Gastrocnemius medialis (tissue), 4 donors: ENCODE measurements at regions of chr16 and their contacts with region 1.

Region 1: DNA sequence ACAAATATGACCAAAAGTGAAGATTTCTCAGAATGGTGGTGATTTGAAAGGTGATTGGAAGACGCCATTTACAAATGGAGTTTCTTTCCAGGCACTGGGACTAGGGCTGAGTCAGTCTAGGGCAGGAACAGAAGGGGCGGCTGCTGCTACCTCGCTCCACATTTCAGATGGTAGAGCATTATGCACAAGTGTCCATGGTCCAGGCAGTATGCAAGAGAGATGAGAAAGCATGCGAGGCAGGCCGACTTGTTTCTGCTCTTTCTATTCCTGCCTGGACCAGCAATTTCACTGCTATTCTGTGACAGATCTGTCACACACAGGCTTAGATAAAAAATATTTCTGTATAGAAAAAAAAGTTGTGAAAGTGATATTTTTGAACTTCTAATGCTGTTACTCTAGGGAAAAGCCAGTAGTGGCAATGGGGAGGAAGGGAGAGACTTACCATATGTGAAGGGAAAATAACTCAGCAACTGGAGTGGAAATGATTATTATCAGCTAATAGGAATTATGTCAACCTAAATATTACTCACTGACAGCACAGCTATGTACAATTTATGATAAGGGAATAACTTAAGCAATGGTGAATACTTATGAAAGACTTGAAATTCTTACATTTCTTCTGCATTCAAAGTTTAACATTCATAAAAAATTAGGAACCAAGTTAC is 134.7 kb upstream of the NETO2 start:
- DNase-seq: no peak
- ATAC-seq: no peak
- H3K4me3 ChIP-seq: no peak overlapping the region
- H3K27ac ChIP-seq: peak overlapping the region in 1 of 4 donors; percentile 19
- H3K4me1 ChIP-seq: peaks cover 18 to 21% of the 10 kb centered on the region in 2 donors
- H3K27me3 ChIP-seq: no peaks in the 10 kb centered on the region
- CTCF ChIP-seq: no peak
- POLR2A ChIP-seq: no peak

Region 2: DNA sequence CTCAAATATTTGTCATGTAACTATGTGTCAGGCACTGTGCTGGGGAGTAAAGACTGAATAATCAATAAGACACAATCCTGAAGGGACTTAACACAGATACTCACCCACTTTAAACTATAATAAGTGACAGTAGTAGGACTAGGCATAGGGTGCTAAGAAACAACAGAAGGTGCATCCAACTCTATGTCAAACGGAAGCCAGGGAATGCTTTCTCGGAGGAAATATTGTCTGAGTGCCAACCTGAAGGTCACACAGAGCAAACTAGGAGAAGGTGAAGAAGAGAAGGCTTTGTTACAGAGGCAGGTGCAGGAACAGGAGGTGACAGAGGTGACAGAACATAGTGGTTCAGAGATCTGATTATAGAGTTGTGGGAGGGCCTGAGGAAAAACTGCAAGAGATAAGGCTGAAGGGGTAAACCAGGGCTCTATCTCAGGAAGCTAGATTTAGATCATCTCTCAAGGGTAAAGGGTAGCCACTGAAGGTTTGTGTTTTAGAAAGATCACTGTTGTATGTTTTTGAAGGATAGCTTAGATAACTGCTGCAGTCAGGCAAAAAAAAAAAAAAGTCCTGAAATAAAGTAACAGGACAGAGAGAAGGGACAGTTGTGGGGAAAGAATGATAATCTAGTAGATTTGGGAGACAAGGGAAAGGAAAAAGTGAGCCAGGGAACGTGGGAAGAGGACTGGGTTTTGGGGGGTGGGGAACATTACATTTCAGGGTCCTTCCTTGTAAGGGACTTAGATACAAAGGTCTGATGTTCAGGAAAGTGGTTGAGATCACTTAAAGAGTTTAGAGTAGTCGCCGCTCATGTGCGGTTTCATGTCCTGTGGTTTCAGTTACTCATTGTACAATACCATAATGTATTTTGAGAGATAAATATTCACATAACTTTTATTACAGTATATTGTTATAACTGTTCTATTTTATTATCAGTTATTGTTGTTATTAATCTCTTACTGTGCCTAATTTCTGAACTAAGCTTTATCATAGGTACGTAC is 49.1 kb before region 1 on chr16:
- in situ Hi-C with region 1: no loop called
- intact Hi-C with region 1: loop called (anchors 2 kb)
- DNase-seq: no peak
- ATAC-seq: no peak
- H3K4me3 ChIP-seq: no peak overlapping the region
- H3K27ac ChIP-seq: no peak overlapping the region
- H3K4me1 ChIP-seq: no peaks in the 10 kb centered on the region
- H3K27me3 ChIP-seq: no peaks in the 10 kb centered on the region
- CTCF ChIP-seq: no peak
- POLR2A ChIP-seq: no peak

Region 3: DNA sequence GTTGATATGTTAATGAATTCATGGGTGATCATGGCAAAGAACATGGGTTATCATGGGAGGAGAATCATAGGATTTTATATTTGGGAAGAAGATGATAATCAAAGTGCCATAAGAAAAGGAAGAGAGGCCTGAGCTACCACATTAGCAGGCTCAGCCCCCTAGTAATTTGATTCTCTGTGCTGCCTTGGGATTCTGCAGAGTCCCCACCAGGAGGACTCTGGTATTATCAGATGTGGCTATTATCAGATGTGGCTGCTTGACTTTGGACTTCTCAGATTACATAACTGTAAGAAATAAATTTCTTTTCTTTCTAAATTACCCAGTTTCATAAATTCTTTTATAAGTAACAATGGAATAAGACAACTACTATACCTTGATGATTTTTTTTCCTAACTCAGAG is 44.8 kb after region 1 on chr16:
- in situ Hi-C with region 1: no loop called
- intact Hi-C with region 1: no loop called
- DNase-seq: no peak
- ATAC-seq: no peak
- H3K4me3 ChIP-seq: no peak overlapping the region
- H3K27ac ChIP-seq: no peak overlapping the region
- H3K4me1 ChIP-seq: peaks cover 0 to 11% of the 10 kb centered on the region in 2 donors
- H3K27me3 ChIP-seq: no peaks in the 10 kb centered on the region
- CTCF ChIP-seq: no peak
- POLR2A ChIP-seq: no peak

Region 4: DNA sequence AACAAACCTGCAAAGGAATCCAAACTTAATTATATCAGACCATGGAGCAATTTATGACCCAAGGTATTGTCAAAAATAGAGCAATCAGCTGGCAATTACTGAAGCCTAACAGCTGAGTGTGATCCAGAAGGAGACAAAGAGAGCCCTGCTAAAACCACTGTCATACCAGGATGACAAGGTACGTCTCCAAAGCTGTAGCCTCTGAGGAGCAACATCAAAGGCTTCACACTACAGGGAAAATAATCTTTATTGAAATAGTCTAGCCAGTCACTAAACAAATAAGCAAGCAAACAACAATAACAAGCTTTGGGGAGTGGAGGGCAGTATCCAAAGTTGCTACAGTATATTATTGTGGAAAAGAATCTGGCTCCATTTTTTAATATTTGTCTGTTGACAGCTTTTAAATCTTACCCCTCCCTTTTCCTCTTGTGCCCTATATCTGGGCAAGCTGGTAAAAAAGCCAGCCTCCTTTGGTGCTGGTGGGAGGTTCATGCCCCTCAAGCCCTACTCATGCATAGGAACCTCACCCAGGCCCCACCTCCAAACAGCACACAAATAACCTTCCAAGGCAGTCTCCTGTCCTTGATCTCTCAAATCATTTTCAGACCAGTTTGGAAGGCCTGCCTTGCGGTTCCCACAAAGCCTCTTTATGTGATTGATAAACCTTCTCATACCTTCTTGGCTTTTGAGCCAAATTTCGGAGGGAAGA is 108.7 kb after region 1 on chr16:
- in situ Hi-C with region 1: no loop called
- intact Hi-C with region 1: no loop called
- DNase-seq: no peak
- ATAC-seq: peak; percentile 33 to 71
- H3K4me3 ChIP-seq: no peak overlapping the region
- H3K27ac ChIP-seq: peak overlapping the region; percentile 17 to 55 (median 22)
- H3K4me1 ChIP-seq: peaks cover 16 to 29% of the 10 kb centered on the region in 2 donors
- H3K27me3 ChIP-seq: no peaks in the 10 kb centered on the region
- CTCF ChIP-seq: no peak
- POLR2A ChIP-seq: no peak

Region 5: DNA sequence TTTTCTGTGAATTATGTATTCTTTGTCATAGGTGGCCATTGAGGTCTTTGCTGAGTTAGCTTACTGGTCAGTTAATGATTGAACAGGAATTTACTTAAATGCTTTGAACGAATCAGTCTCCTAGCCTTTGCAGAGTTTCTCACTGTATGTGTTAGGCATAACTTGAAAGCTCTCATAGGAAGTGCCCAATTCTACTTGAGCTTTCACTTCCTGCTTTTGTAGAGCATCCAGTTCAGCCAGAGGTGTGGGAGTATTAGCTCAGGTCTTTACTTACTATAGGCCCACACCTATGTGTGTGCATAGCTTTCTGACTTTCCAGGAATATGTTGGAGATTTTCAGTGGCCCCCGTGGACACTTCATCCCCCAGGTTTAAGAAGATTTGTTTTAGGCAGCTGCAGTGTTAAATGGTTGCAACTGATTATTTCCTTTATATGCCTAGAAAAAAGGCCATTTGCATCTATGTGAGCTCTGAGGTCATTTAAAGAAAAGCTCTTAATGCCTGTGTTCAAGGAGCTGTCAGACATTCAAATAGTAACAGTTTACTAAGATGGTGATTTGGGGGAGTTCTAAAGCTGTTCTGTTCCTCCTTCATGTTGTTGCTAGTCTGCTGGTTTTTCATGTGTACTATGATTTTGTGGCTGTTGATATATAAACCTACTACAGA is 245.0 kb after region 1 on chr16:
- in situ Hi-C with region 1: no loop called
- intact Hi-C with region 1: no loop called
- DNase-seq: no peak
- ATAC-seq: no peak
- H3K4me3 ChIP-seq: no peak overlapping the region
- H3K27ac ChIP-seq: peak overlapping the region; percentile 4 to 50 (median 32)
- H3K4me1 ChIP-seq: peaks cover 27 to 39% of the 10 kb centered on the region in 2 donors
- H3K27me3 ChIP-seq: no peaks in the 10 kb centered on the region
- CTCF ChIP-seq: no peak
- POLR2A ChIP-seq: no peak